K562 (cell line): ENCODE measurements at regions of chr4 and their contacts with region 1.

Region 1: GRCh38 chr4:1772853-1773538 is 20.1 kb upstream of the FGFR3 start:
- DNase-seq: peak in 2 of 4 experiments; percentile 36 to 43
- ATAC-seq: no peak
- H3K4me3 ChIP-seq: no peak overlapping the region
- H3K27ac ChIP-seq: no peak overlapping the region
- H3K4me1 ChIP-seq: peaks cover 2 to 92% of the 10 kb centered on the region in 2 experiments; a peak in 4 of 5 replicates
- H3K27me3 ChIP-seq: no peaks in the 10 kb centered on the region
- CTCF ChIP-seq: no peak
- EP300 ChIP-seq: no peak
- POLR2A ChIP-seq: no peak
- RAD21 ChIP-seq: no peak

Region 2: GRCh38 chr4:1604711-1605205 is 168.2 kb before region 1 on chr4:
- CTCF ChIA-PET with region 1: no interaction called
- POLR2A ChIA-PET with region 1: no interaction called
- in situ Hi-C with region 1: no loop called
- intact Hi-C with region 1: no loop called
- DNase-seq: no peak
- ATAC-seq: peak; percentile 67
- H3K4me3 ChIP-seq: no peak overlapping the region
- H3K27ac ChIP-seq: no peak overlapping the region
- H3K4me1 ChIP-seq: peaks cover 0 to 59% of the 10 kb centered on the region in 2 experiments; a peak in 2 of 5 replicates
- H3K27me3 ChIP-seq: peaks cover 49 to 81% of the 10 kb centered on the region in 2 experiments
- CTCF ChIP-seq: peak; percentile 43 to 60 (median 50); a peak in 5 of 6 replicates
- EP300 ChIP-seq: no peak
- POLR2A ChIP-seq: no peak
- RAD21 ChIP-seq: peak; percentile 61 to 62

Region 3: GRCh38 chr4:1792832-1793495 is 20.0 kb after region 1 on chr4 and contains the start of gene FGFR3:
- CTCF ChIA-PET with region 1: no interaction called
- POLR2A ChIA-PET with region 1: interaction called, 11 read pairs
- in situ Hi-C with region 1: no loop called
- intact Hi-C with region 1: no loop called
- DNase-seq: peak; percentile 82 to 98 (median 98)
- ATAC-seq: peak; percentile 68
- H3K4me3 ChIP-seq: peak within 1 kb of the TSS; percentile 67
- H3K27ac ChIP-seq: peak within 1 kb of the TSS; percentile 78
- H3K4me1 ChIP-seq: peaks cover 11 to 74% of the 10 kb centered on the region in 2 experiments
- H3K27me3 ChIP-seq: no peaks in the 10 kb centered on the region
- CTCF ChIP-seq: no peak
- EP300 ChIP-seq: no peak
- POLR2A ChIP-seq: no peak
- RAD21 ChIP-seq: 0 out of 4 replicates have a peak, but pooled peaks of 1 of the 2 experiments have one; percentile 2
- polyA plus RNA-seq, gene FGFR3: 1.2 to 1.7 TPM

Region 4: GRCh38 chr4:1842993-1843448 is 70.0 kb after region 1 on chr4:
- CTCF ChIA-PET with region 1: no interaction called
- POLR2A ChIA-PET with region 1: no interaction called
- in situ Hi-C with region 1: no loop called
- intact Hi-C with region 1: no loop called
- DNase-seq: peak in 1 of 4 experiments; percentile 8
- ATAC-seq: no peak
- H3K4me3 ChIP-seq: no peak overlapping the region
- H3K27ac ChIP-seq: no peak overlapping the region
- H3K4me1 ChIP-seq: peaks cover 0 to 4% of the 10 kb centered on the region in 2 experiments; a peak in 1 of 5 replicates
- H3K27me3 ChIP-seq: no peaks in the 10 kb centered on the region
- CTCF ChIP-seq: no peak
- EP300 ChIP-seq: no peak
- POLR2A ChIP-seq: no peak
- RAD21 ChIP-seq: no peak